CD4-positive, alpha-beta memory T cell (primary cell): ENCODE measurements at regions of chr4 and their contacts with region 1.

Region 1: DNA sequence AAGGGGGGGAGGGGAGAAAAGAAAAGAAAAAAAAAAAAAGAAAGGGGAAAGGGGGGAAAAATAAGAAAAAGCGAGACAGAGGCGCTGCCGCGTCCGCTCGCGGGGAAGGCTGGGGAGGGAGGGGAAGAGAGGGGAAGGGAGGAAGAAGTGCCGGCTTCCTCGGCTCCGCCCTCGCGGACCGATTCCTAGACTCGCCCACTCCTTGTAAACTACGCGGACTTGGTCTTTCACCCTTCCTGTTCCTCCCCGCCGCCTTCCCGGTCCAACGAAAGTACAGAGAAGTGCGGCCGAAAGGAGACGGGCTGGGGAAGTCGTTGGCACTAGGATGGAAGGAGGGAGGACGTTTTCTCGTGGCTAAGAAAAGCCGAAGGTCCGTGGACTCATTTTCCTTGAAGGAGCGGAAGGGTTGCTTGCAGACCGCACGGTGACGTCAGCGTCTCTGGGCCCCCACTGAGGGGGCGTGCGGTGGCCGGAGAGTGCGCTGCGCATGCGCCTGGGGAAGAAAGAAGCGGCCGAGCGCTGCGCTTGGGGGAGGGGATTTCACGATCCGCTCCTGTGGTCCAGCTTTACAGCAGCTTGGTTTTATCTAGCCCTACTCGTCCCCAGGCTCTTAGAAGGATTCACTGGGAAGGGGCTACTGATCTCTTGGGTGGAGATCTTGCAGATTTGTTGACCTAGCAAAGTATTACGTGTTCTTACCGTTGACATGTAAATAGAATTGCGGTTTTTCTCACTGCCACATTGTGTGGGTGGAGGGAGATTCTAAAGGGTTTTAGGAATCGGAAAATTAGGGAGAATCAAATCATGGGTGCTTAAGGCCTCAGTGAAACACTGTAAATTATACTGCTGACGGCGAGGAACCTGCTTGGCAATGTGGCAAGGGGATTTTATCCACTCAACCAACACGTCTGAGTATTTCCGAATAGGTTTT is at the start of gene CCNI:
- DNase-seq: peak; percentile 94 to 97 (median 96)
- H3K4me3 ChIP-seq: peak within 1 kb of the TSS; percentile 93 to 98
- H3K4me3 Mint-ChIP-seq: peak within 1 kb of the TSS in 6 of 8 donors; percentile 97 to 99 (median 99)
- H3K27ac ChIP-seq: peak within 1 kb of the TSS; percentile 99
- H3K27ac Mint-ChIP-seq: peak within 1 kb of the TSS in 6 of 7 donors; percentile 100
- H3K4me1 ChIP-seq: peaks cover 49% of the 10 kb centered on the region
- H3K4me1 Mint-ChIP-seq: peaks cover 28 to 39% (median 32%) of the 10 kb centered on the region in 4 donors
- H3K27me3 ChIP-seq: no peaks in the 10 kb centered on the region
- H3K27me3 Mint-ChIP-seq: peaks cover 1 to 4% of the 10 kb centered on the region in 2 donors
- total RNA-seq, gene CCNI: 353 to 360 TPM

Region 2: GRCh38 chr4:75724066-75724866 is 1351.9 kb before region 1 on chr4 and contains the start of gene USO1:
- CTCF ChIA-PET with region 1: no interaction called
- POLR2A ChIA-PET with region 1: no interaction called
- intact Hi-C with region 1: loop called (anchors 5 kb)
- DNase-seq: peak; percentile 99
- H3K4me3 ChIP-seq: peak within 1 kb of the TSS; percentile 91 to 93
- H3K4me3 Mint-ChIP-seq: peak within 1 kb of the TSS; percentile 97 to 100 (median 100)
- H3K27ac ChIP-seq: peak within 1 kb of the TSS; percentile 86
- H3K27ac Mint-ChIP-seq: peak within 1 kb of the TSS; percentile 98 to 100 (median 99)
- H3K4me1 ChIP-seq: peaks cover 52% of the 10 kb centered on the region
- H3K4me1 Mint-ChIP-seq: peaks cover 33 to 64% (median 49%) of the 10 kb centered on the region in 4 donors
- H3K27me3 ChIP-seq: no peaks in the 10 kb centered on the region
- H3K27me3 Mint-ChIP-seq: no peaks in the 10 kb centered on the region
- total RNA-seq, gene USO1: 48.6 to 49.4 TPM

Region 3: DNA sequence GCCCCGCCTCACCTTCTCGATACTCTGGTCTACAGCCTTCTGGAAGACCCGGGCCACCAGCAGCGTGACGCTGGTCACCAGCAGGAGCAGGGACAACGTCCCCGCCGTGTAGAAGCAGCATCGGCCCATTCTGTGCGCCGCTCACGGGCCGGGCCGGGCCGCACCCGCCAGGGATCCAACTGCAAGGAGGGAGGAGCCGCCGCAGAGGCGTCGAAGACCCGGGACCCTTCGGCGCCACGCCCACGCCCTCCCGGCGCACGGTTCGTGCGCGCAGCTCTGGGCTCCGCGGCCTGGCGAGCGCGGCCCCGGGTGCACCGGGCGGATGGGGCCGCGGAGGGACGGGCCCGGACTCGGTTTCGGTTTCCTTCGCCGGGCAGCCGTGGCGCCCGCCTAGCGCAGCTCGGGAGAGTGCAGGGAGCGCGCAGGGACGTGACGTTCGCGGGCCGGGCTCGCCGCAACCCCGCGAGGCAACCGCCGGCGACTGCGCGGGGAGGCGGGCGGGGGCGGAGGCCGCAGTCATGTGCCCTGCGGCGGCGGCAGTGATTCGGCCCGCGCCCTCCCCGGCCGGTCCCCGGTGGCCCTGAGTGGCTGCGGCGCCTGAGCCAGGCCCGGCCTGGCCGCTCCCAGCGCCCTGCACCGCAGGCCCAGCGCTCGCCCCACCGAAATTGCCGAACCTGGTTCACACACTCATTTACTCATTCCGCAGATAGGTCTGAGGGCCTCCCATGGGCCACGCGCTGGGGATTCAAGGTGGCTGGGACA is 862.5 kb before region 1 on chr4 and contains the start of gene SCARB2:
- CTCF ChIA-PET with region 1: no interaction called
- POLR2A ChIA-PET with region 1: interaction called, 3 read pairs
- intact Hi-C with region 1: loop called (anchors 5 kb)
- DNase-seq: peak; percentile 79 to 88 (median 83)
- H3K4me3 ChIP-seq: peak within 1 kb of the TSS; percentile 77 to 90
- H3K4me3 Mint-ChIP-seq: peak within 1 kb of the TSS; percentile 89 to 97 (median 96)
- H3K27ac ChIP-seq: peak within 1 kb of the TSS; percentile 84
- H3K27ac Mint-ChIP-seq: peak within 1 kb of the TSS; percentile 92 to 98 (median 98)
- H3K4me1 ChIP-seq: peaks cover 43% of the 10 kb centered on the region
- H3K4me1 Mint-ChIP-seq: peaks cover 39 to 72% (median 48%) of the 10 kb centered on the region in 4 donors
- H3K27me3 ChIP-seq: no peaks in the 10 kb centered on the region
- H3K27me3 Mint-ChIP-seq: no peaks in the 10 kb centered on the region
- total RNA-seq, gene SCARB2: 23.3 to 23.5 TPM

Region 4: DNA sequence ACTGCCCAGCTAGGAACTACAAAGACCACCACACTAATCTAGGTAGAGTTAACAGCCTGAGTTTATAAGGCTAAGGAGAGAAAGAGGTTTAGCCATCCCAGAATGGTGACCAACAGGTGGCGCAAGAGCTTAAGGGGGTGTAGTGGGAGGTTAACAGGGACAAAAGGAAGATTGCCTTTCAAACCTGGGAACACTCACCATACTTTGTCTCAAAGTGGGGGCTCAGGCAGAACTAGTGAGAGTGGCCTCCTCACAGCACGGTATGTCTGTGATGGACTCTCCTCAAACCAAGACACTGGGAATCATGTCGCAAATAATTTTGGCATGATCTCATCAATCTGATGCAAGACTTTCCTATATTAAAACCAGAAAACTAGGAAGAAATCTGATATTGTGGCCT is 23.8 kb before region 1 on chr4:
- CTCF ChIA-PET with region 1: interaction called, 14 read pairs
- POLR2A ChIA-PET with region 1: interaction called, 7 read pairs
- intact Hi-C with region 1: loop called (anchors 2 kb)
- DNase-seq: peak in 4 of 5 donors; percentile 38 to 59 (median 42)
- H3K4me3 ChIP-seq: no peak overlapping the region
- H3K4me3 Mint-ChIP-seq: no peak overlapping the region
- H3K27ac ChIP-seq: no peak overlapping the region
- H3K27ac Mint-ChIP-seq: peak overlapping the region in 6 of 7 donors; percentile 61 to 70 (median 68)
- H3K4me1 ChIP-seq: no peaks in the 10 kb centered on the region
- H3K4me1 Mint-ChIP-seq: peaks cover 0 to 15% (median 5%) of the 10 kb centered on the region in 4 donors
- H3K27me3 ChIP-seq: no peaks in the 10 kb centered on the region
- H3K27me3 Mint-ChIP-seq: no peaks in the 10 kb centered on the region

Region 5: DNA sequence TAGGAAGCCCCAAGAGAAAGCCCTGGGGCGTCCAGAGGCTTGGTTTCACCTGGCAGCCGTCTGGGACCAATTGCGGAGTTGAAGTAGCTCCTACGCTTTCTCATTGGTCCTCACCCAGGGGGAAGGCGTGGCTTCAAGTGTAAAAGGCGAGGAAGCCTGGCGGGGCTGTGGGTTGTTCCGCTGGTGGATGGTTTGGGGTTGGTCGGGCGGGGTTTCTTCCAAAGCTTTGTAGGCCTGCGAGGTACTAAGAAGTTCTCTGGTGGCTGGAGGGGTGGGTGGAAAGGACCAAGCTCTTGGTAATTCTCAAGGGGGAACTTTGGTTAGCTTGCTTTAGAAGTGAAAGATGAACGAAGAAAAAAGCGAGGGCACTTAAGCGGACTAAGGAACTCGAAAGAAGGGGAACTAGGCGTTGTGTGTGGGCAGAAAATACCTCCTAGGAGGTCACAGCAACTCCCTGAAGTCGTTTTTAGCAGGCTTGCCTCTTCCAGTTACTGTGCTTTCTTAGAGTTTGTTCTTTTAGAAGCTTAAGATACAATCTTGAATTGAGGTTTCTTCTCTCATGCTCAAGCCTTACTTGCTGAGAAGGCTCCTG is 117.5 kb after region 1 on chr4:
- CTCF ChIA-PET with region 1: interaction called, 3 read pairs
- POLR2A ChIA-PET with region 1: interaction called, 10 read pairs
- intact Hi-C with region 1: no loop called
- DNase-seq: peak; percentile 69 to 80 (median 70)
- H3K4me3 ChIP-seq: peak overlapping the region in 1 of 2 donors; percentile 41
- H3K4me3 Mint-ChIP-seq: peak overlapping the region; percentile 87 to 96 (median 91)
- H3K27ac ChIP-seq: peak overlapping the region; percentile 8
- H3K27ac Mint-ChIP-seq: peak overlapping the region; percentile 75 to 95 (median 90)
- H3K4me1 ChIP-seq: peaks cover 14% of the 10 kb centered on the region
- H3K4me1 Mint-ChIP-seq: peaks cover 12 to 19% (median 15%) of the 10 kb centered on the region in 4 donors
- H3K27me3 ChIP-seq: no peaks in the 10 kb centered on the region
- H3K27me3 Mint-ChIP-seq: peaks cover 0 to 2% of the 10 kb centered on the region in 2 donors

Region 6: DNA sequence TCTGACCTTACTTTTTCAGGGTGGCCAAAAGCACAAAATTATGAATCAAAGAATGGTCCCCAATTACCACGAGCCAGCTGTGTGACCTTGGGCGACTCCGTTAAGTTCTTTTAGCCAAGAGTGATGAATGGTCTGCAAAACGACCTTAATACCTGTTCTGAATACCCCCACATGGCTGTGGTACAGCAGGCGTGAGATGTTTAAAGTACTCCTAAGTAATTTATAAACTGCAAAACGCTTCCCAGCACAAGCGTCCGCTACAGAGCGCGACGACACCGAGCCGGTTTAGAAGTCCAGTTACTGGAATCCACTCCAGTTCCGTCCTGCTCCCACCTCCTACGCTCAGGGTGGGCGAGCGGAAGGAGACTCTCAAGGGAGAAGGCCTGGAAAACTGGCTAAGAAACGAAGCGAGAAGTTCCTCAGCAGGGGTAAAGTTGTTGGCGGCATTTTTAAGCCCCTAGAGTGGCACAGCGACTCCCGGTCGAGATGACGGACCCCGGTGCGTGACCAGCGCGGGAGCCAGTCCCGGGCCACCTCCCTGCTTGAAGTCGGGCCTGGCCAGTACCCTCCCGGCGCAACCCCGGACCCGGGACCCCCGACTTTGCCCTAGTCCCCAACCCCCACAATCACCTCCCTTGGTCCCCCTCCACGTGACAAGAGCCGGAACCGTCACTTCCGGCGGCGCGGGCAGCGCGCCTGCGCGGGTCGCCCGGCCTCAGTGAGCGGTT is 1699.3 kb after region 1 on chr4:
- CTCF ChIA-PET with region 1: no interaction called
- POLR2A ChIA-PET with region 1: no interaction called
- intact Hi-C with region 1: loop called (anchors 10 kb)
- DNase-seq: peak; percentile 83 to 90 (median 89)
- H3K4me3 ChIP-seq: peak overlapping the region; percentile 79 to 91
- H3K4me3 Mint-ChIP-seq: peak overlapping the region; percentile 93 to 96 (median 95)
- H3K27ac ChIP-seq: peak overlapping the region; percentile 77
- H3K27ac Mint-ChIP-seq: peak overlapping the region; percentile 92 to 98 (median 96)
- H3K4me1 ChIP-seq: peaks cover 13% of the 10 kb centered on the region
- H3K4me1 Mint-ChIP-seq: peaks cover 12 to 22% (median 15%) of the 10 kb centered on the region in 4 donors
- H3K27me3 ChIP-seq: no peaks in the 10 kb centered on the region
- H3K27me3 Mint-ChIP-seq: no peaks in the 10 kb centered on the region